Breast epithelium (tissue), 4 donors: ENCODE measurements at regions of chr10 and their contacts with region 1.

Region 1: DNA sequence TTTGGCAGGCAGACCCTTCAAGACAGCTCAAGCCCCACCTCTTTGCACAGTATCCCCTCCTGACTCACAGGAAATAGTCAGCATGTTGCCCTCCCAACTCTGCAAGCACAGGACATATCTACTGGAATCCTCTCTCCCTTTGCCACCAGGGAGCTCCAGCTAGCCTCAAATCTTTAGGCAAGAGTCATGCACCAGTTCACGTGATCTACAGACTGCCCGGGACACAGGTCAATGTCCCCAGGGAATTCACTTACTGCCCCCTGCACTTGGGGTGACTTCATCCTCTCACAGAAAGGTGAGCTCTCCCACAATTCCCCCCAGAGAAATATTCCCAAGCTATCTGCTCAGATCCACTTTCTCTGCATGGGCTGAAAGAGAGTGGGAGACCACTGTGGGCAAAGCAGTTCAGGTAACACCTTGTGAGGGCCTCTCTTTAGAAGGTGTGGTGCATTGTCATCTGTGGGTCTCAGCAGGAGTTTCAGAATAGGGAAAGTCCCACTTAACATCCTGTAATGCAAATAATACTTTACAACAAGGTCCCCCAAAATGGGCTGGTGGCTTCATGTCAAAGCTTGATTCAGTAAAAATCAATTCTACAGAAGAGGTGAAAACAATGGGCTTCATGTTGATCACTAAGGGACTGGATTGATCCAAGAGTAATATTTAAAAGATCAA is 129.9 kb downstream of the NOC3L start:
- DNase-seq: no peak
- H3K4me3 ChIP-seq: no peak overlapping the region
- H3K27ac ChIP-seq: no peak overlapping the region
- H3K4me1 ChIP-seq: no peaks in the 10 kb centered on the region
- H3K27me3 ChIP-seq: no peaks in the 10 kb centered on the region
- CTCF ChIP-seq: no peak
- POLR2A ChIP-seq: no peak

Region 2: GRCh38 chr10:94747838-94748237 is 515.0 kb after region 1 on chr10:
- intact Hi-C with region 1: no loop called
- DNase-seq: no peak
- H3K4me3 ChIP-seq: no peak overlapping the region
- H3K27ac ChIP-seq: no peak overlapping the region
- H3K4me1 ChIP-seq: no peaks in the 10 kb centered on the region
- H3K27me3 ChIP-seq: no peaks in the 10 kb centered on the region
- CTCF ChIP-seq: no peak
- POLR2A ChIP-seq: no peak

Region 3: GRCh38 chr10:94997741-94998174 is 764.9 kb after region 1 on chr10:
- intact Hi-C with region 1: loop called (anchors 10 kb)
- DNase-seq: no peak
- H3K4me3 ChIP-seq: no peak overlapping the region
- H3K27ac ChIP-seq: no peak overlapping the region
- H3K4me1 ChIP-seq: no peaks in the 10 kb centered on the region
- H3K27me3 ChIP-seq: no peaks in the 10 kb centered on the region
- CTCF ChIP-seq: no peak
- POLR2A ChIP-seq: no peak